Heart right ventricle (tissue), 16 donors: ENCODE measurements at regions of chr3 and their contacts with region 1.

Region 1: GRCh38 chr3:101573449-101574387 is at the start of gene PCNP:
- DNase-seq: peak; percentile 98 to 100
- ATAC-seq: peak; percentile 95 to 97 (median 96)
- H3K4me3 ChIP-seq: peak within 1 kb of the TSS; percentile 75 to 93 (median 92)
- H3K27ac ChIP-seq: peak within 1 kb of the TSS; percentile 94 to 99 (median 98)
- H3K4me1 ChIP-seq: peaks cover 3 to 47% (median 40%) of the 10 kb centered on the region in 9 donors
- H3K27me3 ChIP-seq: no peaks in the 10 kb centered on the region
- CTCF ChIP-seq: peak; percentile 79 to 97 (median 92)
- total RNA-seq, gene PCNP: 114 to 145 (median 124) TPM

Region 2: DNA sequence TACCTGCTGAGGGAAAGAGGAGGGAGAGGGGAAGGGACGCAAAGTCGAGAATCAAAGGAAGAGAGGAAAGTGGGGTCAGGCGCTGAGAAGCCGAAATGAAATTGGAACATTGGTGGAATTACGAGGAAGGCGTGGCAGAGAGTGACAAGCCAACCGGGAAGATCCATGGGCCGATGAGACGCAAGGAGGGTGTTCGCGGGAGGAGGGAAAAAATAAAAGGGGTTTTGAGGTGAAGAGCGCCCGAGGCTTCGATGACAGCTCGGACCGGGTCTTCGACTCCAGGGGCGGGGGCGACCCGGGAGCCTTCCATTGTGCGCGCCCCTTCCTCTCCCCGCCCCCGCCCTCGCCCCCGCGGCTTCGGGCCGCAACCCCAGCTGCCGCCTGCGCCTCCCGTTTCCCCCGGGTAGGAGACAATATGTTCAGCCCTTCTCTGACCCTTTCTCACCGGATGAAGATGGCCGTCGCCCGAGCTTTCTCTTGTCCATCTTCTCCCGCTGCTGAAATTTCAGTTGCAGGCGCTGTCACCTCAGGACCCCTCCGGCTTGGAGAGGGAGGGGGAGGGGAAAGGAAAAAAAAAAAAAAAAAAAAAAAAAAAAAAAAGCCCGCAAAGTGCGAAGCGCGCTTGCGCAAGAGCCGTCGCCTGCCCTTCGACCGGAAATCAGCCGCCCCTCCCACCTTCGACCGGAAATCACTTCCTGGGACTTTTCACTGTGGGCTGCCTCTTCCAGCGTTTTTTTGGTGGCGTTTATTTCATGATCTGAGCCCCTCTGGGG is 60.9 kb before region 1 on chr3 and contains the start of gene SENP7:
- intact Hi-C with region 1: loop called in 5 of 10 experiments (anchors 2 to 10 kb)
- DNase-seq: peak; percentile 88 to 90
- ATAC-seq: peak; percentile 87 to 93 (median 90)
- H3K4me3 ChIP-seq: peak within 1 kb of the TSS; percentile 67 to 99 (median 84)
- H3K27ac ChIP-seq: peak within 1 kb of the TSS; percentile 85 to 99 (median 94)
- H3K4me1 ChIP-seq: peaks cover 3 to 33% (median 17%) of the 10 kb centered on the region in 9 donors
- H3K27me3 ChIP-seq: peaks cover 0 to 11% (median 0%) of the 10 kb centered on the region in 7 donors
- CTCF ChIP-seq: no peak
- total RNA-seq, gene SENP7: 8.5 to 11.1 (median 10.0) TPM

Region 3: GRCh38 chr3:101561630-101562328 is 11.9 kb before region 1 on chr3 and contains the start of gene TRMT10C:
- intact Hi-C with region 1: loop called in 1 of 10 experiments (anchors 1 kb)
- DNase-seq: peak; percentile 91 to 93
- ATAC-seq: peak; percentile 98 to 100 (median 100)
- H3K4me3 ChIP-seq: peak within 1 kb of the TSS; percentile 58 to 88 (median 75)
- H3K27ac ChIP-seq: peak within 1 kb of the TSS; percentile 75 to 94 (median 91)
- H3K4me1 ChIP-seq: peaks cover 3 to 36% (median 16%) of the 10 kb centered on the region in 9 donors
- H3K27me3 ChIP-seq: peaks cover 0 to 26% (median 18%) of the 10 kb centered on the region in 7 donors
- CTCF ChIP-seq: no peak
- total RNA-seq, gene TRMT10C: 20.9 to 29.7 (median 24.5) TPM

Region 4: DNA sequence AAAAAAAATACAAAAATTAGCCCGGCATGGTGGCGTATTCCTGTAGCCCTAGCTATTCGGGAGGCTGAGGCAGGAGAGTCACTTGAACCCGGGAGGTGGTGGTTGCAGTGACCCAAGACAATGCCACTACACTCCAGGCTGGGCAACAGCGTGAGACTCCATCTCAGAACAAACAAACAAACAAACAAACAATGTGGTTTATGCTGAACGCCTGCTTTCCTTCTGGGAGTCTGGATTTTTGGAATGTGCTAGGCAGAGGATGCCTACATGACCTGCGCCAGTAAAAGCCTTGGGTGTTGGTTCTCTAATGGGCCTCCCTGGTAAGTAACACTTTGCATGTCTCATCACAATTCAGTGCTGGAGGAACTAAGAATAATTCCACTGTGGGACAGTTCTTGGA is 43.8 kb after region 1 on chr3:
- intact Hi-C with region 1: no loop called
- DNase-seq: no peak
- ATAC-seq: no peak
- H3K4me3 ChIP-seq: no peak overlapping the region
- H3K27ac ChIP-seq: no peak overlapping the region
- H3K4me1 ChIP-seq: no peaks in the 10 kb centered on the region
- H3K27me3 ChIP-seq: no peaks in the 10 kb centered on the region
- CTCF ChIP-seq: no peak

Region 5: DNA sequence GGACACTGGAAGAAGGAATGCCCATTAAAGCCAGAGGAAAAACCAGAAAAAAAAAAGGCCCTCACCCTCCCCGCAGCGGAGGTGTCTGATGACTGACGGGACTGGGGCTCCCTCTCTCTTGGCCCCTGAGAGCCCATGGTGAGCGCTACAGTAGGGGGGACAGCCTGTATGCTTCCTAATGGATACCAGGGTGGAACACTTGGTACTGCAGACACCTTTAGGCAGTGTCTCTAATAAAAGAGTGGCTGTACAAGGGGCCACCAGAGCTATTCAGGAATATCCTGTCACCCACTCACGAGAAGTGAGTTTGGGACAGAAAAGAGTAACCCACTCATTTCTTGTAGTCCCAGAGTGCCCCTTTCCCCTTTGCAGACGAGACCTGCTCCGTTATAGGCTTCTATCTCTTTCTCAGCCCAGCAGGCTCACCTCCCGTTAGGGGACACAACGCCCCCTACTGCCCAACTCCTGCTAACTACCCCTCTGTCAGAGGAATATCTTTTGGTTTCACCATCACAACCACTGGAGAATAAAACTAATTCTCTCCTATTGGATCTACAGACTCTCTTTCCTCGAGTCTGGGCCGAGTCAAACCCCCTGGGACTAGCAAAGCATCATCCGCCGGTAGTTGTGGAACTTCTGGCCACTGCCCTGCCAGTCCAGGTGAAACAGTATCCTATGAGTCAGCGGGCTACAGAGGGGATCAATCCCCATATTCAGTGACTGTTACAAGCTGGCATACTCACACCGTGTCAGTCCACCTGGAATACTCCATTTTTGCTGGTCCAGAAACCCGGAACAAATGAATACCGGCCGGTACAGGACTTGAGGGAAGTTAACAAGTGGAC is 62.5 kb after region 1 on chr3:
- intact Hi-C with region 1: loop called in 4 of 10 experiments (anchors 5 to 10 kb)
- DNase-seq: peak; percentile 53 to 55
- ATAC-seq: peak; percentile 67 to 86 (median 82)
- H3K4me3 ChIP-seq: no peak overlapping the region
- H3K27ac ChIP-seq: no peak overlapping the region
- H3K4me1 ChIP-seq: peaks cover 0 to 9% (median 0%) of the 10 kb centered on the region in 9 donors
- H3K27me3 ChIP-seq: no peaks in the 10 kb centered on the region
- CTCF ChIP-seq: peak; percentile 54 to 73 (median 70)

Region 6: DNA sequence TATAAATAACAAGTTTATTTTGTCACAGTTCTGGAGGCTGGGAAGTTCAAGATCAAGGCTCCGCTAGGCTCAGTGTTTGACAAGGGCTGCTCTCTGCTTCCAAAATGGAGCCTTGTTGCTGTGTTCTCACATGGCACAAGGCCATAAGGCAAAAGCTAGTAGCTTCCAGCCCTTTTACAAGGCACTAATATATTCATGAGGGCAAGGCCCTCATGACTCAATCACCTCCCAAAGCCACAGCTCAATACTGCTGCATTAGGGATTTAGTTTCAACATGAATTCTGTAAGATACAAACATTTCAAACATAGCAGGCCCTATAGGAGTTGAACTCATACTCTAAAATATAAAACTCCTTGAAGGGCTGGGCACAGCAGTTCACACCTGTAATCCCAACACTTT is 73.0 kb after region 1 on chr3:
- intact Hi-C with region 1: no loop called
- DNase-seq: no peak
- ATAC-seq: no peak
- H3K4me3 ChIP-seq: no peak overlapping the region
- H3K27ac ChIP-seq: no peak overlapping the region
- H3K4me1 ChIP-seq: peaks cover 0 to 3% (median 0%) of the 10 kb centered on the region in 9 donors
- H3K27me3 ChIP-seq: no peaks in the 10 kb centered on the region
- CTCF ChIP-seq: no peak

Region 7: GRCh38 chr3:101676765-101677435 is 103.2 kb after region 1 on chr3 and contains the start of gene ZBTB11:
- intact Hi-C with region 1: loop called in 4 of 10 experiments (anchors 2 to 10 kb)
- DNase-seq: peak; percentile 99 to 100
- ATAC-seq: peak; percentile 89 to 97 (median 95)
- H3K4me3 ChIP-seq: peak within 1 kb of the TSS; percentile 78 to 100 (median 96)
- H3K27ac ChIP-seq: peak within 1 kb of the TSS; percentile 83 to 99 (median 98)
- H3K4me1 ChIP-seq: peaks cover 10 to 46% (median 28%) of the 10 kb centered on the region in 9 donors
- H3K27me3 ChIP-seq: no peaks in the 10 kb centered on the region
- CTCF ChIP-seq: peak in 8 of 9 donors; percentile 36 to 73 (median 56)
- total RNA-seq, gene ZBTB11: 7.5 to 13.3 (median 8.7) TPM

Region 8: DNA sequence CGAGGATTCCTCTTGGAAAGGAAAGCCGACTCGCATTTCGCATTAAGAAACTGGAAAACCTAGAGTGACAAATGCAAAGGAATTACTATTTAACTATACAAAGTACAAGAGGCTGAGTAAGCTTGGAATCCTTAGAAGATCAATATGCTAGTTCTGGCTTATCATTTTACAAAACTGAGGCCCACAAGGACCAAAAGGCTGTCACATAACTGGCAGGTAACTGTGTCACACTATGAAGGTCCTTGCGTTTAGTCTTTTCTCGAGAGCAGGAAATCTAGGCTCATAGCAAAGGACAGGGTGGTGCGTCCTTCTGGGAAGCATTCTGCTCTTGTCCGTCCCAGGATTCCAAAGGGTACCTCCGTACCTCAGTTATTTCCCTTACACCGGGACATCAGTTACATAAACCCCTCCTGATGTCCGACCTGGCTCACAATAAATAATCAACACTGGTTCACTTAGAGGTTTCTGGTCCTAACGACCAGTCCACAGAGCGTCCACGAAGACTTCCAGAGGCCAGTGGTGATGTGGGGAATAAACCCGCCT is 112.2 kb after region 1 on chr3:
- intact Hi-C with region 1: loop called in 2 of 10 experiments (anchors 2 to 5 kb)
- DNase-seq: no peak
- ATAC-seq: peak; percentile 5 to 48 (median 28)
- H3K4me3 ChIP-seq: peak overlapping the region; percentile 42 to 96 (median 76)
- H3K27ac ChIP-seq: peak overlapping the region; percentile 10 to 97 (median 90)
- H3K4me1 ChIP-seq: peaks cover 5 to 63% (median 37%) of the 10 kb centered on the region in 9 donors
- H3K27me3 ChIP-seq: no peaks in the 10 kb centered on the region
- CTCF ChIP-seq: no peak